HEK293T (cell line): ENCODE measurements at regions of chr2 and their contacts with region 1.

Region 1: DNA sequence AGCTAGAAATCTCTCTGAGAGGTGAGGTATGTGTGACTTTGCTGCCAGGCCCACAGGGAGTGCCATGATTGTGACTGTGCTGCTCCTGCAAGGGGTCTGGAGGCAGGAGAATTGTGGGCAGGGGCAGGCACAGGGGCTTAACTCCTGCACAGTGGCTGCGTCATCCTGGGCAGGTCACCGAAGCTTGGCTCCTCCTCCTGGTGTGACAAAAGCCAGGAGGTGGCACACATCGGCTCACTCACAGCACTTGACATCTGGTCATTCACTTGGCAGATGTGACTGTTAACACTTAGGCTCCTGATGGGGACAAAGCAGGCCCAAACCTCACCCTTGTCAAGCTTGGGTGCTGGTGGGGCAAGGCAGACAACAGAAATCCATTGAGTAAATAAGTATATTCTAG is 36.4 kb upstream of the GLI2 start:
- DNase-seq: no peak

Region 2: GRCh38 chr2:120656273-120656950 is 42.9 kb before region 1 on chr2:
- CTCF ChIA-PET with region 1: no interaction called
- POLR2A ChIA-PET with region 1: no interaction called
- DNase-seq: no peak

Region 3: DNA sequence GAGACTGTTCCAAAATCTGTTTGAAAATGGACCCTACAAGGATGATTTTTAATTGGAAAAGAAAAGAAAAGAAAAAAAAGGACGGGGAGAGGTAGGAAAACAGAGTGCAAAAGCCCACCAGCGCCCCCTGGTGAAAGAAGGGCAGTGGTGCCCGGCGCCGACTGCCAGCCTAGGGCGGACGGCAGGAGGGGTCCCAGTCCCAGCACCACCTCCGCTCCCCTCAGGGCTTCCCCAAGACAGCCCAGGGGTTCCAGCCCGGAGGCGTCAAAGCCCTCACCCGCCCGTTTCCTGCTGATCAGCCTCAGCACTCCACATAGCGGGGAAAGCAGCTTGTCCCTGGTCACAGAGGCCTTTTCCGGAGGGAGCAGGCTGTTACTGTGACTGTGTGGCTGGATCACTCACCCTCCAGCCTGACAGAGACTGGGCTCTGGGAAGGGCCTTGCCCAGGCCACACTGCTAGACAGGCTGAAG is 371.8 kb after region 1 on chr2:
- CTCF ChIA-PET with region 1: interaction called, 16 read pairs
- POLR2A ChIA-PET with region 1: interaction called, 19 read pairs
- DNase-seq: peak; percentile 79

Region 4: GRCh38 chr2:121076885-121077549 is 377.7 kb after region 1 on chr2:
- CTCF ChIA-PET with region 1: interaction called, 22 read pairs
- POLR2A ChIA-PET with region 1: interaction called, 19 read pairs
- DNase-seq: peak; percentile 79